Activated B cell treated with CpG ODN at 0.5 μM for 24 hours (primary cell): ENCODE measurements at regions of chr11 and their contacts with region 1.

Region 1: DNA sequence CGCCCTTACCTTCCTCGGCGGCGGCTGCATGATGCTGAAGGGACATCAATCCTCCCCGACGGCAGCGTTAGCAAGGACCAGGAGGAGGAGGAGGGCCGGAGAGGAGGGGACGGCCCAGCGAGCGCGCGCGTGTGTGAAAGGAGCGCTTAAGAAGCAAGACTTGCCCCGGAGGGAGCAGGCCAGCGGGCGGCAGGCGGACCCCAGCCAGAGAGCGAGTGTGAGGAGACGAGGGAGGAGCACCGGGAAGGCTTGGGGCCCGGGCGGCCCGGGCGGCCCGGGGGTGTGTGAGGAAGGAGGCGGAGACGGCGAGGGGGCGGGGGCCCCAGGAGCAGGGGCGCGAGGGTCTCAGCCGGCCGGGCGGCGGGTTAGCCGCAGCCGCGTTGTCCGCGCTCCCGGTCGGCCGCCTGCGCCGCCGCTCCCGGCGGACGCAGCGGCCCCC is 251 bp downstream of the FCHSD2 start:
- DNase-seq: no peak
- ATAC-seq: peak; percentile 22
- H3K4me3 Mint-ChIP-seq: peak overlapping the region; percentile 99
- H3K27ac Mint-ChIP-seq: peak overlapping the region; percentile 95
- H3K4me1 Mint-ChIP-seq: peaks cover 78% of the 10 kb centered on the region
- H3K27me3 Mint-ChIP-seq: no peaks in the 10 kb centered on the region
- CTCF ChIP-seq: no peak

Region 2: GRCh38 chr11:72831513-72832300 is 310.2 kb before region 1 on chr11:
- CTCF ChIA-PET with region 1: interaction called, 9 read pairs
- POLR2A ChIA-PET with region 1: interaction called, 4 read pairs
- intact Hi-C with region 1: loop called (anchors 2 kb)
- DNase-seq: no peak
- ATAC-seq: peak; percentile 65
- H3K4me3 Mint-ChIP-seq: no peak overlapping the region
- H3K27ac Mint-ChIP-seq: peak overlapping the region; percentile 80
- H3K4me1 Mint-ChIP-seq: peaks cover 24% of the 10 kb centered on the region
- H3K27me3 Mint-ChIP-seq: no peaks in the 10 kb centered on the region
- CTCF ChIP-seq: peak; percentile 30

Region 3: DNA sequence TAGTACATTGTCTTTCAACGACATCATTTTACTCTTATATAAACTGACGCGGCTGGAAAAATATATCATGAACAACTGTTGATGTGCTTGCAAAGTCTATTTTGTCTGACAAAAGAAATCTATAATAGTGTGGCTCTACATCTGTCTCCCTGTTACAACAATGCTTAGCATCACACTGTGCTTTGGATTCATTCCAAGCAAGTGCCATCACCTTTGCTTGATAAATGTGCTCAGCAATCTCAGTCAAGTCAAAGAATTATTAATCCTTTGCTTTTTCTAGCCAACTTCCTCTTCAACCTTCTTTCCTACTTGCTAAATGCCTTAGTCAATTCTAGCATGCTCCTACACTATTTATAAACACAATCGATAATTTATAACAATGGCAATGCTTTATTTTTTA is 140.3 kb before region 1 on chr11:
- CTCF ChIA-PET with region 1: interaction called, 4 read pairs
- POLR2A ChIA-PET with region 1: interaction called, 3 read pairs
- intact Hi-C with region 1: loop called (anchors 2 kb)
- DNase-seq: no peak
- ATAC-seq: no peak
- H3K4me3 Mint-ChIP-seq: no peak overlapping the region
- H3K27ac Mint-ChIP-seq: peak overlapping the region; percentile 63
- H3K4me1 Mint-ChIP-seq: peaks cover 71% of the 10 kb centered on the region
- H3K27me3 Mint-ChIP-seq: no peaks in the 10 kb centered on the region
- CTCF ChIP-seq: no peak

Region 4: GRCh38 chr11:73157053-73158010 is 15.5 kb after region 1 on chr11:
- CTCF ChIA-PET with region 1: interaction called, 36 read pairs
- POLR2A ChIA-PET with region 1: interaction called, 551 read pairs
- intact Hi-C with region 1: loop called (anchors 1 kb)
- DNase-seq: peak; percentile 51
- ATAC-seq: peak; percentile 51
- H3K4me3 Mint-ChIP-seq: peak overlapping the region; percentile 78
- H3K27ac Mint-ChIP-seq: peak overlapping the region; percentile 97
- H3K4me1 Mint-ChIP-seq: peaks cover 95% of the 10 kb centered on the region
- H3K27me3 Mint-ChIP-seq: no peaks in the 10 kb centered on the region
- CTCF ChIP-seq: no peak

Region 5: DNA sequence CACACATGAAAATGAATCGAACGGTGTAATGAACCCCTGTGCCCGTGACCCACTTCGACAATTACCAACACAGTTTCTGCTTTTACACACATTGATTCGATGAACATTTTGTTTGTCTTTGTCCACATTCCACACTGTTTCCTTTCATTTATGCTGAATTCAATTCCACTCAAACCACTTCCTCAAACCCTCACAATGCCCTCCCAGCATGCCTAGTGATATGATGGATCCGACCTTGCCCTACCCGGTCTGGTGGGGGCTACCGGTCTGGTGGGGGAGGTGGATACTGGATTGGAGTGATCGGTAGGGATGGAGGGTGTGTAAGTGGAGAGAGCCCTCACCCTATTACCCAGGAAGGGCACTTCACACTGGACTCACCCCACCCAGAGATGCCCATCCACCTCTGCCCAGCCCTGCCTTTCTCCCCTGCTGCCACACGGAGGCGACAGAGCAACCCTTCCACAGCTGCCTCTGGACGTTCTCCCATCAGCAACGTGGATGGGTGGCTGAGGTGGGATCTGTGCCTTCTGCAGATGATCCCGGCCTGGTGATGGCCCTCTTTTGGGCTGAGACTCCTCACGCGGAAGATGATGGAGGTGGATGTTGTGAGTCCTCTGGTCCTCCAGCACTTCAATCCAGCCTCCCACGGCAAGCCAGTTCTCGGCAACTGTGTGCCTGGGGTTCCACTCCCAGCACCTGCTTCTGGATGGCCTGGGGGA is 43.2 kb after region 1 on chr11:
- CTCF ChIA-PET with region 1: interaction called, 3 read pairs
- POLR2A ChIA-PET with region 1: interaction called, 14 read pairs
- intact Hi-C with region 1: no loop called
- DNase-seq: peak; percentile 65
- ATAC-seq: peak; percentile 41
- H3K4me3 Mint-ChIP-seq: peak overlapping the region; percentile 53
- H3K27ac Mint-ChIP-seq: no peak overlapping the region
- H3K4me1 Mint-ChIP-seq: peaks cover 33% of the 10 kb centered on the region
- H3K27me3 Mint-ChIP-seq: no peaks in the 10 kb centered on the region
- CTCF ChIP-seq: peak; percentile 60